Testis (tissue), 5 donors: ENCODE measurements at regions of chr16 and their contacts with region 1.

Region 1: DNA sequence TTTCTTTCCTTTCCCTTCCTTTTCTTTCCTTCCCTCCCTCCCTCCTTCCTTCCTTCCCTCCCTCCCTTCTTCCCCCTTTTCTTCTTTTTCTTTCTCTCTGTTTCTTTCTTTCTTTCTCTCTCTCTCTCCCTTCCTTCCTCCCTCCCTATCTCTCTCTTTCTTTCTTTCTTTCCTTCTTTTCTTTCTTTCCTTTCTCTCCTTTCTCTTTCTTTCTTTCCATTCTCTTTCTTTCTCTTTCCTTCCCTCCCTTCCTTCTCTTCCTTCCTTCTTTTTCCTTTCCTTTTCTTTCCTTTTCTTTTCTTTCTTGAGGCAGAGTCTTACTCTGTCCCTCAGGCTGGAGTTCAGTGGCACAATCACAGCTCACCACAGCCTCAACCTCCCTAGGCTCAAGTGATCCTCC is 31.0 kb downstream of the DEXI start:
- DNase-seq: no peak
- H3K4me3 ChIP-seq: no peak overlapping the region
- H3K27ac ChIP-seq: no peak overlapping the region
- H3K4me1 ChIP-seq: no peaks in the 10 kb centered on the region
- H3K27me3 ChIP-seq: no peaks in the 10 kb centered on the region
- CTCF ChIP-seq: no peak
- POLR2A ChIP-seq: no peak

Region 2: GRCh38 chr16:10745841-10746240 is 165.4 kb before region 1 on chr16:
- intact Hi-C with region 1: loop called (anchors 5 kb)
- DNase-seq: no peak
- H3K4me3 ChIP-seq: no peak overlapping the region
- H3K27ac ChIP-seq: no peak overlapping the region
- H3K4me1 ChIP-seq: peaks cover 4% of the 10 kb centered on the region
- H3K27me3 ChIP-seq: no peaks in the 10 kb centered on the region
- CTCF ChIP-seq: no peak
- POLR2A ChIP-seq: no peak

Region 3: GRCh38 chr16:11273721-11274324 is 362.6 kb after region 1 on chr16:
- intact Hi-C with region 1: no loop called
- DNase-seq: no peak
- H3K4me3 ChIP-seq: no peak overlapping the region
- H3K27ac ChIP-seq: no peak overlapping the region
- H3K4me1 ChIP-seq: no peaks in the 10 kb centered on the region
- H3K27me3 ChIP-seq: no peaks in the 10 kb centered on the region
- CTCF ChIP-seq: no peak
- POLR2A ChIP-seq: no peak